ENCODE measurements at regions of chr12 and their contacts with region 1.

Region 1: DNA sequence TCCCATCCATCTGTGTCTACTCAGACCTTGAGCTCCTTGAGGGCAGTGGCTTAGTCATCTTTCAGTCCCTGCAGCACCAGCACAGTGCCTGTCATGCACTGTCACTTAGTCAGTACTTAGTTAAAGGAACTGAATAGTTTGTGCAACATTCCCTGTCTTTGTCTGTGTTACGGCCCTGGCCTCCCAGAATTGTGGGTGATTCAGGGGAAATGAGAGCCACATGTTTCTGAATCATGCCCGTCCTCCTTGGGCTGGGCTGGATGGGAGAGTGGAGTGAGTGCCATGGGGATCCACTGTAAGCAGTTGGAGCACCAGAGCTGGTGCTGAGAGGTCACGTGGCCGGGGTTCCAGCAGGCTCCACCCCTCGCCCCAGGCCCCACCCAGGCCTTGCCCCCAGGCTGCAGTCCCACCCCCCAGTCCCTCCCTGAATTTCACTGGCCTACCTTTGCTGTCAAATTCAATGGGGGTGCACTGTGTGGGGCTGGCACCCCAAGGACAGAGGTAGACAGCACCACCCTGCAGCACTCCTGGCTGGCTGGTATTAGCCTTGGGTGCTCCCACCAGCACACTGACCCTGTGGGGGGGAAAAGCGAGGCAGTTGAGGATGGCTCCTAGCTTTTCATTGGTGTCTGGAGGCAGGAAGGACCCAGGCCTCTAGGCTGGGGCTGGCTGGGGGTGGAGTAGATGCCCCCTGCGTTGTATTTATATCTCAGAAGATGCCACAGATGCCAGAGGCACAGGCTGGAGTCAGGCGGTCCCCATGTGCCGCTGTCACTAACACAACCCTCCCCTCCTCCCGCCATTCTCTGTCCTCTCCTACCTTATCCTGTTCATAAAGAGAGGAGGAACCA is 7.5 kb downstream of the ITGA5 start:
- DNase-seq: peak; percentile 51
- H3K4me3 Mint-ChIP-seq: peak overlapping the region; percentile 83
- H3K27ac Mint-ChIP-seq: peak overlapping the region; percentile 85
- H3K4me1 Mint-ChIP-seq: peaks cover 52% of the 10 kb centered on the region
- H3K27me3 Mint-ChIP-seq: no peaks in the 10 kb centered on the region

Region 2: GRCh38 chr12:54220092-54220557 is 191.5 kb before region 1 on chr12:
- intact Hi-C with region 1: no loop called
- DNase-seq: peak; percentile 61
- H3K4me3 Mint-ChIP-seq: no peak overlapping the region
- H3K27ac Mint-ChIP-seq: no peak overlapping the region
- H3K4me1 Mint-ChIP-seq: peaks cover 18% of the 10 kb centered on the region
- H3K27me3 Mint-ChIP-seq: peaks cover 4% of the 10 kb centered on the region

Region 3: DNA sequence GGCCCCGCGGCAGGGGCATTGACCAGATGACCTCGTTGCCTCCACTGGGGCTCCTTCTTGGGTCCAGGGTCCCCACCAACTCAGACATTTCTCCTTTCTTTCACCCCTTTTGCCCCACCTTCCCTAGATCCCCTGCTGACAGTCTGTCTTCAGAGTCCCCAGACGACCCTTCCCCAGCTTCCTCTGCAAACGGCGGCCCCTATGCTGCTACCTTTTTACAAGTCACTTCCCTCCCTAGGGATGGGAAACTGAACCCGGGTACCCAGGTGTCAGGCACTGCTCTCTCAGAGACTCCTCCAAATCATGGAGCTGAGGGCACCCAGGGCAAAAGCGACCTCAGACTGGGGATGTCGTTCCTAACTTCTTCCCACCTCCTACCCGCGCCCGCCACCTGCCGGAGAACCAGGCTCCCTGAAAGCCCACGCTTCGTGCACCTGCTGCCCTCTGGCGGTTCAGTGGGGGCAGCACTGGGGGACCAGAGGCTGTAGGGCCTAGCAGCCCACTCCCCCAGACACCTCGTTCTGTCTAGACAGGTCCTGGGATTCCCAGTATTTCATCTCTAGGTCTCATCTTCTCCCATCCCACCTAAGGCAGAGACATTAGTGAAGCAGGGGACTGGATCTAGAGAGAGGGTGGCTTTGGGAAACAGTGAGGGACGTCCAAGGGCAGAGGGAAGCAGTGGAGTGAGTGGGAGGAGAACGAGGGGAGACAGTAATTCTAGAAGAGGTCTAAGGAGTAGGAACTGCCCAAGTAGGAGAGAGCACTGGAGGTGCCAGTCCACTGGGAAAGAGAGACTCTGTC is 32.0 kb before region 1 on chr12:
- intact Hi-C with region 1: no loop called
- DNase-seq: peak; percentile 83
- H3K4me3 Mint-ChIP-seq: peak overlapping the region; percentile 65
- H3K27ac Mint-ChIP-seq: no peak overlapping the region
- H3K4me1 Mint-ChIP-seq: peaks cover 11% of the 10 kb centered on the region
- H3K27me3 Mint-ChIP-seq: peaks cover 12% of the 10 kb centered on the region

Region 4: GRCh38 chr12:54398995-54399793 is 12.4 kb before region 1 on chr12:
- intact Hi-C with region 1: loop called (anchors 1 kb)
- DNase-seq: peak; percentile 80
- H3K4me3 Mint-ChIP-seq: no peak overlapping the region
- H3K27ac Mint-ChIP-seq: no peak overlapping the region
- H3K4me1 Mint-ChIP-seq: peaks cover 2% of the 10 kb centered on the region
- H3K27me3 Mint-ChIP-seq: no peaks in the 10 kb centered on the region

Region 5: GRCh38 chr12:54428050-54429013 is 16.7 kb after region 1 on chr12:
- intact Hi-C with region 1: no loop called
- DNase-seq: no peak
- H3K4me3 Mint-ChIP-seq: no peak overlapping the region
- H3K27ac Mint-ChIP-seq: no peak overlapping the region
- H3K4me1 Mint-ChIP-seq: peaks cover 34% of the 10 kb centered on the region
- H3K27me3 Mint-ChIP-seq: peaks cover 27% of the 10 kb centered on the region

Region 6: GRCh38 chr12:54439521-54440255 is 28.1 kb after region 1 on chr12:
- intact Hi-C with region 1: loop called (anchors 2 kb)
- DNase-seq: no peak
- H3K4me3 Mint-ChIP-seq: no peak overlapping the region
- H3K27ac Mint-ChIP-seq: peak overlapping the region; percentile 29
- H3K4me1 Mint-ChIP-seq: peaks cover 7% of the 10 kb centered on the region
- H3K27me3 Mint-ChIP-seq: peaks cover 15% of the 10 kb centered on the region